ENCODE measurements at regions of chr3 and their contacts with region 1.

Region 1: DNA sequence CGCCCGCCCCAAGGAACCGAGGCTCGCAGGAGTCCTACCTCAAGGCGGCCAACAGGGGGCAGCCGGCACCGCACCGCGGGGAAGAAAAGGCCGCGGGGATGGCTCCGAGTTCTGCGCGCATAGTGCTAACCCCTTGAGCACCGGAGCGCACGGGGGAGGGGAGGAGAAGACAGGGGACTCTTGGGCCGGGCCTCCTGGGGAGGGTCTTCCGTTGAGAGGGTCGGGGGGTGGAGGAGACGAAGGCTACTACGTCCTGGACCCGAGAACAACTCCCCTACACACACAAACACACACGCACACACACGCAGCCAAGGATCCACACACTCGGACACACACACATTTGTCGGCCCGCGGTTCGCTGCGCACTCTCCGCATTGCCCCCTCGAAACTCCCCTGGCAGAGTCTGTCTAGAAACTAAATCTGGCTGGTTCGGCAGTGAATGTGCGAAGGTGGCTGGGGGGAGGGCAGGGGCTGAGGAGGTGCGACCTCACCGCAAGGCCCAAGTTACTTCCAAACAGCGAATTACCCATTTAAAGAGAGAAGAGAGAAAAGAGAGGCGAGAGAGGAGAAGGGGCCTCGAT is 1.8 kb downstream of the WNT5A start:
- DNase-seq: peak; percentile 65 to 66
- ATAC-seq: peak; percentile 53 to 69
- H3K4me3 ChIP-seq: peak overlapping the region; percentile 57 to 82 (median 68)
- H3K27ac ChIP-seq: peak overlapping the region; percentile 61 to 82 (median 77)
- H3K4me1 ChIP-seq: peaks cover 0 to 41% of the 10 kb centered on the region in 2 donors
- H3K27me3 ChIP-seq: peaks cover 4 to 13% (median 6%) of the 10 kb centered on the region in 3 donors
- CTCF ChIP-seq: peak in 4 of 5 experiments; percentile 19 to 93 (median 71)
- POLR2A ChIP-seq: no peak

Region 2: DNA sequence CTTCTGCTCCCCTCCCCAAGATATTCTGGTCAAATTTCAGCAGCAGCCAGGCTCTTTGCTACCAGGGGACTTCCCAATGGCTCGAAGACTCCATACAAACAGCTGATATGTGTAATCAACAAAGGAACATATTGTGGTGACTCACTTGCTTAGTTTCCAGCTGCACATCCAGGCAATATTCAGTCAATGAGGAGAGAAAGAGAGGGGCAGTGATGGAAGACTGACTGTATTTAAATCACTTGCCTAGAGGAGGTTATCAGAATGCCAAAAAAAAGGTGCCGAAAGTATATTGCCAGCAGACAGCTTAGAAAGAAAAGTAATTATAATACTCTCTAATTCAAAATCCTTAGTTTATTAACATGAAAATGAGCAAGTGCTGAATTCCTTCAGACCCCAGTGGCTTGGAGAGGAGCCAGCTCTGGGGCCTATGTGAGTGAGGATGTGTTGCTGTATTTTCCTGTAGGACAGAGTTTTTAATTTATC is 794.0 kb before region 1 on chr3:
- in situ Hi-C with region 1: no loop called
- intact Hi-C with region 1: no loop called
- DNase-seq: no peak
- ATAC-seq: no peak
- H3K4me3 ChIP-seq: no peak overlapping the region
- H3K27ac ChIP-seq: no peak overlapping the region
- H3K4me1 ChIP-seq: no peaks in the 10 kb centered on the region
- H3K27me3 ChIP-seq: no peaks in the 10 kb centered on the region
- CTCF ChIP-seq: no peak
- POLR2A ChIP-seq: no peak

Region 3: DNA sequence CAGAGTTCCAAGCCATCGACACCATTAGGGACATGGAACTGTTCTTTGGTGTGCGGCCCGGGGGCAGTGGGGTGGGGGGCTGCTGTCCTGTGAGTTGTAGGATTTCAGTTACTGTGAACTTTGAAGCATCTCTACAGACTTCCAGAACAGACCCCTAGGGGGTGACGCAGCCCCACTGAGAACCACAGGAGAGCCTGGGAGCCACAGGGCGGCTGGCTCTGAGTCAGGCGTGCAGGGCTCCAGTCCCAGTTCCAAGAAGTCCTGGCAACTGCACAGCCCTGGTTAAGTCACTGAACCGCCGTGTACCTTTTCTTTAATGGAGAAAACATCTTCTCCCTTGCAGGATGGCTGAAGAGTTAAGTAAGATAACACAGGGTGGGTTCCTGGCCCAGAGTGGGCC is 533.9 kb before region 1 on chr3:
- in situ Hi-C with region 1: no loop called
- intact Hi-C with region 1: loop called (anchors 5 kb)
- DNase-seq: peak; percentile 77 to 78
- ATAC-seq: peak; percentile 92 to 97
- H3K4me3 ChIP-seq: peak overlapping the region in 1 of 4 donors; percentile 20
- H3K27ac ChIP-seq: no peak overlapping the region
- H3K4me1 ChIP-seq: peaks cover 16 to 20% of the 10 kb centered on the region in 2 donors
- H3K27me3 ChIP-seq: no peaks in the 10 kb centered on the region
- CTCF ChIP-seq: peak; percentile 47 to 73 (median 66)
- POLR2A ChIP-seq: no peak

Region 4: DNA sequence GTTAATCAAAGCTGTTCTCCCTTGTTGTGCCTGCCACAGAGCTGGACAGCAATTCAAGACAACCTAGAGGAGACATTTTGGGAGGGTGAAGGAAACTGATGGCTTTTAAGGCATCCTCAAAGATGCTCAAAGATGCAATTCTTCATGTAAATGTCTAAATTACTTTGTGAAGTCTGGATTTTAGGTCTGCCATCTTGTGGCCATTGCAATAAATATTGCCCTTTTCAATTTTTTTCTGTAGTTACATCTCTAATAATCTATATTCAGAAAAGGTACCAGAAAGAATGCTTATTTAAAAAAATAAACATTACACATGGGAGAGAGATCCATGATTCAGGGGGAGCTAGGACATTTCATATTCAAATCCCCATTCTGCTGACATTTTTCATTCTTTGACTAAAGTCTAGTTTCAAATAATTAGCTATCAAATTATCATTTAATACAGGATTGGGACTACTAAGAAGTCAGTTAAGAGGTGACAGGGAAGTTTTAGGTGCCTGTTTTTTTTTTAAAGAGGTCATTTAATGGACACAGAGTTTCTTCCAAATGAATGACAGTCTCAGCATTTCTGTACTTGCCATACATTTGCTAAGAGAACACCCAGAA is 261.6 kb after region 1 on chr3:
- in situ Hi-C with region 1: loop called in 3 of 4 experiments (anchors 10 to 25 kb)
- intact Hi-C with region 1: loop called (anchors 2 kb)
- DNase-seq: no peak
- ATAC-seq: no peak
- H3K4me3 ChIP-seq: no peak overlapping the region
- H3K27ac ChIP-seq: no peak overlapping the region
- H3K4me1 ChIP-seq: no peaks in the 10 kb centered on the region
- H3K27me3 ChIP-seq: no peaks in the 10 kb centered on the region
- CTCF ChIP-seq: no peak
- POLR2A ChIP-seq: no peak

Region 5: GRCh38 chr3:56238299-56238698 is 753.0 kb after region 1 on chr3:
- in situ Hi-C with region 1: loop called in 1 of 4 experiments (anchors 25 kb)
- intact Hi-C with region 1: no loop called
- DNase-seq: no peak
- ATAC-seq: no peak
- H3K4me3 ChIP-seq: no peak overlapping the region
- H3K27ac ChIP-seq: no peak overlapping the region
- H3K4me1 ChIP-seq: no peaks in the 10 kb centered on the region
- H3K27me3 ChIP-seq: no peaks in the 10 kb centered on the region
- CTCF ChIP-seq: no peak
- POLR2A ChIP-seq: no peak

Region 6: GRCh38 chr3:56494686-56495322 is 1009.5 kb after region 1 on chr3:
- in situ Hi-C with region 1: loop called in 1 of 4 experiments (anchors 25 kb)
- intact Hi-C with region 1: no loop called
- DNase-seq: peak; percentile 37 to 53
- ATAC-seq: peak; percentile 75 to 86
- H3K4me3 ChIP-seq: no peak overlapping the region
- H3K27ac ChIP-seq: no peak overlapping the region
- H3K4me1 ChIP-seq: no peaks in the 10 kb centered on the region
- H3K27me3 ChIP-seq: no peaks in the 10 kb centered on the region
- CTCF ChIP-seq: peak; percentile 64 to 84 (median 75)
- POLR2A ChIP-seq: no peak